Activated T-helper 1 cell treated with anti-CD3 and anti-CD28 coated beads, Interleukin-12 subunit alpha, Interleukin-12 subunit beta, Interleukin-2, Interleukin-4 antibody, amounts not matched to agents 30 ng/mL and 10 ng/mL and 1 ng/mL, durations not matched to agents 14 hours and 24 hours and 36 hours (primary cell): ENCODE measurements at regions of chr17 and their contacts with region 1.

Region 1: DNA sequence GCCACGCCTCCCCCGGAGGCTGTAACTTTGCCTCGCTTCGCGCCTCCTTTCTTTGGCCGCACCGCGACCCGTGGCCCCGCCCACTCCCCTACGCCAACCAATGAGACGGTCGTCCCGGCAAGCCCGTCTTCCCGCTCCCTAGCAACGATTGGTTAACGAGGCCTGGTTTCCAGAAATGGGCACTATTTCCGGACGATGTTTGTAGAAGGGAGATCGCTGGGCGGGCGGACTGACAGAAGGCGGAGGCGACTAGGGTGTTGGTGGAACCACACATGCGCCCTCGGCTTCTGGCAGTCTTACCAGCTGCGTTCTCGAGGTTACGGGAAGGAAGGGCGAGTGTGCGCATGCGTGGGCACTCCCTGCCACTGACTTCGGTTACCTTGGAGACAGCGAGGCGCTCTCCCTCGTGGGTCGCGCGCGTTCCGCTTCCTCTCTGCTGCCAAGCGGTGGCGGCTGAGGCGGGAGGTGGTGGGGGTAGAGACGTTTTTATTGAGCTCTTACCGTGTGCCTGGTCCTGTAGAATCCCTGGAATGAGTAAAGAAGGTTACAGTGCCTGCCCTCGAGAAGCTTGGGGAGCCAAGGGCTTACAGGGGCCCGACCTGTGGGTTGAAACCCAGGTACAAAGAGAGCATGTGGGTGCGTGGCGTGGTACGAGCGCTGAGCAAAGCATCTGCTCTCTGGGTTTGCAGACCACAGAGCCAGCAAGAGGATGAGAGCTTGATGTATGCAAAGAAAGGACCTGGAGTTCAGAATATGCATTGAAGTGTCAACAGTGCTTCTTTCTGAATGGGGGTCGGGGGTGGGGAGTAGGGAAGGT is 500 bp upstream of the MAP3K14 start:
- DNase-seq: peak; percentile 99
- H3K4me3 Mint-ChIP-seq: peak overlapping the region; percentile 88
- H3K27ac Mint-ChIP-seq: peak overlapping the region; percentile 95
- H3K4me1 Mint-ChIP-seq: peaks cover 80% of the 10 kb centered on the region
- H3K27me3 Mint-ChIP-seq: no peaks in the 10 kb centered on the region

Region 2: DNA sequence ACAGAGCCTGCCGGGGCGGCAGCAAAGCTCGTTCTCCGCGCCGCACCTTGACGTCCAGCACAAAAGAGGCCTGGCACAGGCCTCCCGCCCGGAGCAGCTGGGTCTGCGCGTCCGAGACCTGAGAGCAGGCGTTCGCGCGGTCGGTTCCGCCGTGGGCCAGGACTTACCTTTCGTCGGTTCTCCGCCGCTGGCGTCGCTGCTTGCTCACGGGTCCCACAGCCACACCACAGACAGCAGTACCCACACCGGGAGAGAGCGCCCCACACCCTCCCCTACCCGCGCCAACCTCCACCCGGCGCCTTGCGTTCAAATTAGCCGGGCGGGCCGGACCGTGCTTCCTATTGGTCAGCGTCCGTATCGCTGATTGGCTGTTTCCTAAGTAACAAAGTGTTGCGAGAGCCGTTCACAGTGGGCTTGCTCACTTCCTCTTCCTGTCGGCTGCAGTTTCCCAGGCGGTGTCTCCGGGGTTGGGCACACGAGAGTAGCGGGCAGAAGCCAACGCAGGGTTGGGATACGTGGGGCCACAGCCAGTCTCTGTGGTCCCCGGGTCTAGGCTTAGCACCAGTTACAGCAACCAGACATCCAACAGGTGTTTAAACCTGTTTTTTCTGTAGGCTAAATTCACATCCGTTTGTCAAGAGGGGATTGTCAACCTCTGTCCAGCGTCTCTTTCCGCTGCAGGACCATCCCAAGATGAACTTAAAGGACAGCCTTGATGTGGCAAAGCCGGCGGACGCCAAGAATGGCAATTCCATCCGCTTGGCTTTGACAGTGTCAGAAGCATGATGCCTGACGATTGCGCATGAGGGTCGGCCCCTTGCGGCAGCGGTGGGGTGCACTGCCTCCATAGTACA is 369.6 kb before region 1 on chr17 and contains the start of gene KIF18B:
- intact Hi-C with region 1: loop called (anchors 5 kb)
- DNase-seq: peak; percentile 90
- H3K4me3 Mint-ChIP-seq: peak within 1 kb of the TSS; percentile 95
- H3K27ac Mint-ChIP-seq: peak within 1 kb of the TSS; percentile 92
- H3K4me1 Mint-ChIP-seq: peaks cover 37% of the 10 kb centered on the region
- H3K27me3 Mint-ChIP-seq: peaks cover 2% of the 10 kb centered on the region
- total RNA-seq, gene KIF18B: 41.4 and 42.8 TPM in 2 replicates

Region 3: GRCh38 chr17:45148183-45149036 is 168.9 kb before region 1 on chr17 and contains the start of gene HEXIM1:
- intact Hi-C with region 1: loop called (anchors 1 kb)
- DNase-seq: peak; percentile 99
- H3K4me3 Mint-ChIP-seq: peak within 1 kb of the TSS; percentile 96
- H3K27ac Mint-ChIP-seq: peak within 1 kb of the TSS; percentile 98
- H3K4me1 Mint-ChIP-seq: peaks cover 26% of the 10 kb centered on the region
- H3K27me3 Mint-ChIP-seq: no peaks in the 10 kb centered on the region
- total RNA-seq, gene HEXIM1: 65.9 and 67.9 TPM in 2 replicates

Region 4: GRCh38 chr17:45218895-45219661 is 98.2 kb before region 1 on chr17:
- intact Hi-C with region 1: loop called (anchors 1 kb)
- DNase-seq: peak; percentile 73
- H3K4me3 Mint-ChIP-seq: peak overlapping the region; percentile 93
- H3K27ac Mint-ChIP-seq: peak overlapping the region; percentile 80
- H3K4me1 Mint-ChIP-seq: peaks cover 42% of the 10 kb centered on the region
- H3K27me3 Mint-ChIP-seq: no peaks in the 10 kb centered on the region

Region 5: GRCh38 chr17:45353043-45353442 is 35.7 kb after region 1 on chr17:
- intact Hi-C with region 1: loop called (anchors 1 kb)
- DNase-seq: peak; percentile 32
- H3K4me3 Mint-ChIP-seq: peak overlapping the region; percentile 13
- H3K27ac Mint-ChIP-seq: no peak overlapping the region
- H3K4me1 Mint-ChIP-seq: peaks cover 34% of the 10 kb centered on the region
- H3K27me3 Mint-ChIP-seq: peaks cover 15% of the 10 kb centered on the region

Region 6: DNA sequence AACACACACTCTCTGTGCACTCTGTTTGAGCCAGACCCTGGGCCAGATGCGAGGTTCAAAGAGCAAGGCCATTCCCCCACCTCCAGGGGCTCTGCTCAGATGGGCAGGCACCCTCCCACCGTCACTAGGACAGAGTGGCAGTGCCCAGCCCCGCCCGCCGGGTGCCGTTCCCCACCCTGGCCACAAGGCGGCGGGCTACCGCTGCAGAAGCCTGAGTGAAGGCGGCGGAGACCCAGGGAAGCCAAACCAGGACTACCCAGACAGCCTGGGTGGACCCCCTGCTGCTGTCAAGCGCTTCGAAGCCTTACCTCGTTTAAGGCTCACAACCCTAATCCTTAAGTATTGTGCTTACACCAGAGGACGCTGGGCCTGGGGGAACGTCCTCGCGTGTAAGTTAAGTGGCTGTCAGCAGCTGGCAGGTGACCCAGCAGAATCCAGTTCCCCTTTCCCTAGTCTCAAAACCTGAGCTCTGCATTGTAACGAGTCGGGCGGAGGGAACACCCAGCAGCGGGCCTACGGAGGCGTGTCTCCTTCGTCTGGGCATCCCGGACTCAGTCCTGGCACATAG is 110.8 kb after region 1 on chr17:
- intact Hi-C with region 1: no loop called
- DNase-seq: peak; percentile 78
- H3K4me3 Mint-ChIP-seq: peak overlapping the region; percentile 51
- H3K27ac Mint-ChIP-seq: peak overlapping the region; percentile 58
- H3K4me1 Mint-ChIP-seq: peaks cover 29% of the 10 kb centered on the region
- H3K27me3 Mint-ChIP-seq: no peaks in the 10 kb centered on the region

Region 7: GRCh38 chr17:46193626-46194392 is 876.5 kb after region 1 on chr17:
- intact Hi-C with region 1: loop called (anchors 5 kb)
- DNase-seq: peak; percentile 95
- H3K4me3 Mint-ChIP-seq: peak overlapping the region; percentile 73
- H3K27ac Mint-ChIP-seq: peak overlapping the region; percentile 91
- H3K4me1 Mint-ChIP-seq: peaks cover 68% of the 10 kb centered on the region
- H3K27me3 Mint-ChIP-seq: no peaks in the 10 kb centered on the region